Ovary (tissue), 10 donors: ENCODE measurements at regions of chr10 and their contacts with region 1.

Region 1: DNA sequence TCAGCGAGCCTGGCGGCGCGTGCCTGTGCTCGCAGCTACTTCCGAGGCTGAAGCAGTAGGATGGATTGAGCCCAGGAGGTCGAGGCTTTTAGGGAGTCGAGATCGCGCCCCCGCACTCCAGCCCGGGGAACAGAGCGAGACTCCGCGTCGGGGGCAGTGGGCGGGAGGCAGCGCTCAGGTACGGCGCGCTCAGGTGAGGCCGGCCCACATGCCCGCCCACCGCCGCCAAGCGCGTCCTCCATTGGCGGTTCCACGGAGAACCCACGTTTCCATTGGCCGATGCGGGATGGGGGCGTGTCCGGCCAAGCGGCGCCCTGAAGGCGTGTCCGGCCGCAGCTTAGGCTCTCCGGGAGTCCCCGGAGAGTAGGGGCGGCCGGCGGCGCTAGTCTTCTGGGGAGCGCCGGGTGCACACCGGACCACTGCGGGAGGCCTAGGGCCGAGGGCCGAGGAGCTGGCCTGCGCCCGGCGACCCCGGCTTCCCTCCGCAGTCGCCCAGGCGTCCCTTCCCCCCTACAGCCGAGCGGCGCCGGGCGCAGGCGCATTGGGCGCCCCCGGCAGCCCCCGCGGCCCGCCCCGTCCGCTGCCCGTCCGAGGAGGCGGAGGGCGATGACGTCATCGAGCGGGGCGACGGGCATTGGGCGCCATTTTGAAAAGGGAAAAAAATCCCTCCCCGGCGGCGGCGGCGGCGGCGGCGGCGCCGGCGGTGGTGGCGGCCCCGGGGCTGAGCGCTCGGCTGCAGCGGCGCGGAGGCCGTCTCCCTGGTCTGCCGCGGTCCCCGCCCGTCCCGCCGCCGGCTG is at the start of gene PPP2R2D:
- DNase-seq: peak; percentile 93 to 96 (median 95)
- H3K4me3 ChIP-seq: peak within 1 kb of the TSS; percentile 70
- H3K27ac ChIP-seq: peak within 1 kb of the TSS; percentile 75 to 95
- H3K4me1 ChIP-seq: peaks cover 21% of the 10 kb centered on the region
- H3K27me3 ChIP-seq: no peaks in the 10 kb centered on the region
- CTCF ChIP-seq: peak in 1 of 3 donors; percentile 11
- EP300 ChIP-seq: no peak
- POLR2A ChIP-seq: peak; percentile 50
- total RNA-seq, gene PPP2R2D: 26.7 to 48.9 (median 42.0) TPM

Region 2: DNA sequence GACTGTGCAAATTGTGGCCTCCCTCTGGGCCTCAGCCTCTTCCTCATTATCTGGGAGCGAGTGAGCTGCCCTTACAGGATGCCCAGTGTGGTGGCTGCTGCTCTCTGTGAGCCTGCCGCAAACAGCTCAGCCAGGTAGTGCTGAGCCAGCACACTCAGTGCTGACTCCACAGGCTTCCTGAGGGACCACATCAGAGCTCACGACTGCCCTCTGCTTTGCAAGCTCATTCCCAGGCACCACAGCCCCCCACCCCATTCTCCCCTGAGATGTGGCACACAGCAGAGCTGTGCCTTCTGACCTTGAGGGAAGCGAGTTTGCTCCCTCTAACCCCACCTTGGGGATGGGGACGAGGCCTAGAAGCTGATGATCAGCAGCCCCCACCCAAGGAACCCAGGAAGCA is 230.2 kb before region 1 on chr10:
- intact Hi-C with region 1: no loop called
- DNase-seq: no peak
- H3K4me3 ChIP-seq: no peak overlapping the region
- H3K27ac ChIP-seq: no peak overlapping the region
- H3K4me1 ChIP-seq: no peaks in the 10 kb centered on the region
- H3K27me3 ChIP-seq: no peaks in the 10 kb centered on the region
- CTCF ChIP-seq: no peak
- EP300 ChIP-seq: no peak
- POLR2A ChIP-seq: no peak

Region 3: DNA sequence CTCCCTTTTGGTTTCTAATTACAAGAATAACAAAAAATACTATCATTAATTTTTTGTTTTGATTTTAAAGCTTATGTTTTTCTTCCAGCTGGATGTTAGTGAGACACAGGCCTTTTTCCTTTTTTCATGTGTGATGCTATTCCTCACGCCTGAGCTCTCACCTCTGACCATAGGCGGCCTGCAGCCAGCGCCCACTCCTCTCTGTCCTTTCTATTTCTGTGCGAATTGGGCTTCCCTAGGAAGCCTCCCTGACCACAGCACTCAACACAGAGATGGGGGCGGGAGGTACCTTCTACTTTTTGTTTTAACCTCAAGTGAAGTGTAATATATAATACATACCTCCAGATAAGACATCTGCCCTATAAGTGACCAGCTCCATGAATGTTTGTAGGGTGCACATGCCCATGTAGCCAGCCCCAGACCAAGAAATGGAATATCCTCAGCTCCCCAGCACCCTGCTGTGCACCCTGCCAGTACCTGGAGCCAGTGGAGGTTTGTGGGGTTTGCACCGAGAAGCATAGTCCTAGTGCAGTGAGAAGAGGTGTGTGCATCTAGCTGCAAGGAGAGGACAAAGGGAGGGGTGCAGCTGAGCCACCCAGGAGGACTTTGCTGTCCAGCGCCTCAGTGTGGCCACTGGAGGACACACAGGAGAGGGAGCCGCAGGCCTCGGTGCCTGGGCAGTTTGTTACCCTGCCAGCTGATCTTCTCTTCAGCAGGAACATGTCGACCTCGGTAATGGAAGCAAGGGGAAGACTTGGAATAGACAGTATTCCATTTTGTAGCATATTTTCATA is 42.7 kb after region 1 on chr10:
- intact Hi-C with region 1: loop called in 1 of 4 experiments (anchors 10 kb)
- DNase-seq: peak in 4 of 5 donors; percentile 48 to 68 (median 64)
- H3K4me3 ChIP-seq: no peak overlapping the region
- H3K27ac ChIP-seq: peak overlapping the region in 1 of 2 donors; percentile 39
- H3K4me1 ChIP-seq: peaks cover 9% of the 10 kb centered on the region
- H3K27me3 ChIP-seq: no peaks in the 10 kb centered on the region
- CTCF ChIP-seq: peak in 1 of 3 donors; percentile 10
- EP300 ChIP-seq: no peak
- POLR2A ChIP-seq: no peak

Region 4: GRCh38 chr10:131972474-131973071 is 72.0 kb after region 1 on chr10:
- intact Hi-C with region 1: loop called in 1 of 4 experiments (anchors 10 kb)
- DNase-seq: peak in 4 of 5 donors; percentile 45 to 70 (median 59)
- H3K4me3 ChIP-seq: no peak overlapping the region
- H3K27ac ChIP-seq: no peak overlapping the region
- H3K4me1 ChIP-seq: no peaks in the 10 kb centered on the region
- H3K27me3 ChIP-seq: no peaks in the 10 kb centered on the region
- CTCF ChIP-seq: no peak
- EP300 ChIP-seq: no peak
- POLR2A ChIP-seq: no peak

Region 5: GRCh38 chr10:131981429-131982184 is 81.1 kb after region 1 on chr10 and contains the start of gene BNIP3:
- intact Hi-C with region 1: loop called in 3 of 4 experiments (anchors 5 to 10 kb)
- DNase-seq: peak; percentile 96 to 99 (median 98)
- H3K4me3 ChIP-seq: peak within 1 kb of the TSS; percentile 74
- H3K27ac ChIP-seq: peak within 1 kb of the TSS; percentile 62 to 84
- H3K4me1 ChIP-seq: peaks cover 10% of the 10 kb centered on the region
- H3K27me3 ChIP-seq: no peaks in the 10 kb centered on the region
- CTCF ChIP-seq: no peak
- EP300 ChIP-seq: no peak
- POLR2A ChIP-seq: peak; percentile 93
- total RNA-seq, gene BNIP3: 45.1 to 166 (median 70.1) TPM

Region 6: DNA sequence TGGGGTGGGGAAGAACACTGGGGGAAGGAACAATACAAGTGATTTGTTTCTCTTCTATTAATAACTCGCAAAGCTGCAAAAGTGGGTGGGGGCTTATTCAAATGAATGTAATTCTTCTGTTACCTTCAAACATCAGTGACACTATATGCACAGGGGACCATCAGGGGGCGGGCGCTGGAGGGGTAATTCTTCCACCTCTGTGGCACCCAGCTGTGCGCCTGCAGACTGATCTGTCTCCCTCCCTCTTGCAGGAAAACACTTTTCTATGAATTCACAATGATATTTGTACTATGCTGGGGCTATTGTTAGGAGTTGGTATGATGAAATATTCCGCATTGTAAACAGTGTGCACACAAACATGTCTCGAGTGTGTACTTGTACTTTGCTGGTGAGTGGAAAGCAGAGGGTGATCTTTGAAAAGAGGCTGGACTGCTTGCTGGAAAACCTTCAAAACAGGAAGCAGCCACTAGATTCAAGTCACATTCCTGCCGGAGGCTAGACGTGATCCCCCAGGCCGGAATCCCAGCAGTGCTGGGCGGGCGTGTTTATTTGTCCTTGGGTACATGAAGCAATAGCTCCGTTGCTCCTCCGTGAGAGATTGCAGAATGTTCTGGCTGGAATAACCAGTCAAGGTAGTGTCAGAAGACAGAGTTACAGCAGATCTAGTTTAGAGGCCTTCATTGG is 97.0 kb after region 1 on chr10:
- intact Hi-C with region 1: loop called in 1 of 4 experiments (anchors 5 kb)
- DNase-seq: peak; percentile 79 to 93 (median 89)
- H3K4me3 ChIP-seq: no peak overlapping the region
- H3K27ac ChIP-seq: peak overlapping the region; percentile 78 to 87
- H3K4me1 ChIP-seq: peaks cover 31% of the 10 kb centered on the region
- H3K27me3 ChIP-seq: no peaks in the 10 kb centered on the region
- CTCF ChIP-seq: no peak
- EP300 ChIP-seq: no peak
- POLR2A ChIP-seq: peak; percentile 50